Ovary (tissue), 10 donors: ENCODE measurements at regions of chr1 and their contacts with region 1.

Region 1: DNA sequence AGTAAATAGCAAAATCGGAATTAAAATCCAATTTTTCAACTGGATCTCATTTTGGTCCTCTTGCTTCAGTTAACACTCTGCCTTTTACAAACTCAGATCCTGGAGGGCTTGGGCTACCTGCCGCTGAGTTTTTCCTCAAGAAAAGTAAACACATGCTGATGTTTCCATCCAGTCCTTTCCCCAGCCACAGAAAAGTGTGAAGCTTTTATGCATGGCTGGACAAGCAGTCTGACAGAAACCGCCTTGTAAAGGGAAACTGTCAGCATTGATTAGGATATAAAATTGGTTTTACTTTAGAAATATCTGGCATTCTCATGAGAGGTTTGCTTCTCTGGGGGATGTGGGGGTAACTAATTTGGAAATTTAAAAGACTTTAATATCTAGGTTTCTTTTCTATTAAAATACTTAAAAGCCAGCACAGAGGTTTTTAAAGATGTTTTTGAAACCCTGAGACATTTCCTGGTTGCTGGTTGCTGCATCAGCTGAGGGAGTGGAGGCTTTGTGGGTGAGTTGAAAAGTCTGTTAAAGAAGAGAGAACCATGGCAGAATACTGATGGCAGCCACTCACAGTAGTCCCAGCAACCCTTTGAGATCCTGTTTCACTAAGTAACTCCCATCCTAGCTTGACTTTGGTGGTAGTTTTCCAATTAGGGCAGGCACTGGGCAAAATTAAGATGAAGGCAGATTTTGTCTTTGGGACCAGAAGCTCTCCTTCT is 238.3 kb downstream of the PAPPA2 start:
- DNase-seq: no peak
- H3K4me3 ChIP-seq: no peak overlapping the region
- H3K27ac ChIP-seq: no peak overlapping the region
- H3K4me1 ChIP-seq: no peaks in the 10 kb centered on the region
- H3K27me3 ChIP-seq: no peaks in the 10 kb centered on the region
- CTCF ChIP-seq: no peak
- EP300 ChIP-seq: no peak
- POLR2A ChIP-seq: no peak

Region 2: DNA sequence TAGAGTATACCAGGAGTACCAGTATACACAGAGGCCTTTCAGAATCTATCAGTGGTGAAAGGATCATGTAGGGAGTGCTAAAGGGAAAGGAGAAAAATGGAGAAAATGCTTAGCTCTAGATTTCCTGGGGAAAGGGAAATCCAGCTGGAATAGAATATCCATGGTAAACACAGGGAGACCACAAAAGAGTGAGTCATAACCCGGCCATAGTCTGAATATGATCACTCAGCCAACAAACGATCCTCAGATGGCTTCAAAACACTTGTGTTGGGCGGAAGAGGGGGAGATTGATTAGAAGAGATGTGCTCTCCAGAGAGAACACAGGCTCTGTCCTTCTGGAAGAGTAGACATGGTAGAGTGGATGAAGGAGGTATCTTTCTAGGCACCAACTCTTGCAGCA is 57.8 kb before region 1 on chr1:
- intact Hi-C with region 1: no loop called
- DNase-seq: no peak
- H3K4me3 ChIP-seq: no peak overlapping the region
- H3K27ac ChIP-seq: no peak overlapping the region
- H3K4me1 ChIP-seq: no peaks in the 10 kb centered on the region
- H3K27me3 ChIP-seq: no peaks in the 10 kb centered on the region
- CTCF ChIP-seq: no peak
- EP300 ChIP-seq: no peak
- POLR2A ChIP-seq: no peak

Region 3: GRCh38 chr1:177122461-177123251 is 421.3 kb after region 1 on chr1:
- intact Hi-C with region 1: loop called in 1 of 4 experiments (anchors 5 kb)
- DNase-seq: no peak
- H3K4me3 ChIP-seq: no peak overlapping the region
- H3K27ac ChIP-seq: no peak overlapping the region
- H3K4me1 ChIP-seq: no peaks in the 10 kb centered on the region
- H3K27me3 ChIP-seq: no peaks in the 10 kb centered on the region
- CTCF ChIP-seq: no peak
- EP300 ChIP-seq: no peak
- POLR2A ChIP-seq: no peak